ENCODE measurements at regions of chrX and their contacts with region 1.

Region 1: GRCh38 chrX:146934256-146934655 is 119.7 kb upstream of the CXorf51A start:
- DNase-seq: no peak
- H3K4me3 ChIP-seq: no peak overlapping the region
- H3K27ac ChIP-seq: no peak overlapping the region
- H3K4me1 ChIP-seq: no peaks in the 10 kb centered on the region
- H3K27me3 ChIP-seq: no peaks in the 10 kb centered on the region
- CTCF ChIP-seq: no peak
- EP300 ChIP-seq: no peak
- POLR2A ChIP-seq: no peak

Region 2: DNA sequence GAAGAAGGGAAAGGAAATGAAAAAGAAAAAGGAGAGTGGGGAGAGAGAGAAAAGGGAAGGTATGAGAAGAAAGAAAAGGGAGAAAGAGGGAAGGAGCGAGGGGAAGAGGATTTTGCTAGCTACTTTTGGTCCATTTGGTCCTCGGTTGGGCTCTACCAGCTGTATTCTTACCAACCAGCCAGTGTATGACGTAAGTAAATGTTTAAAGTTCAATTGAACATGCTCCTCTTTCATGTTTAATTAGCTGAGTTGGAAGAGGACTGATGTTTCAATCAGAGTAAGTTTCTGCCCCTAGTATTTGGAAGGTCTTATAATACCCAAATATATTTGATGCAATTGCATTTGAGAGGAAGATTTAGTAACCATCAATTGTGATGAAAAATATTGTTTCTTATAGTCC is 548.7 kb before region 1 on chrX:
- in situ Hi-C with region 1: no loop called
- intact Hi-C with region 1: no loop called
- DNase-seq: no peak
- H3K4me3 ChIP-seq: no peak overlapping the region
- H3K27ac ChIP-seq: no peak overlapping the region
- H3K4me1 ChIP-seq: no peaks in the 10 kb centered on the region
- H3K27me3 ChIP-seq: no peaks in the 10 kb centered on the region
- CTCF ChIP-seq: no peak
- EP300 ChIP-seq: no peak
- POLR2A ChIP-seq: no peak

Region 3: GRCh38 chrX:146956760-146957159 is 22.5 kb after region 1 on chrX:
- in situ Hi-C with region 1: no loop called
- intact Hi-C with region 1: loop called (anchors 1 kb)
- DNase-seq: no peak
- H3K4me3 ChIP-seq: no peak overlapping the region
- H3K27ac ChIP-seq: no peak overlapping the region
- H3K4me1 ChIP-seq: no peaks in the 10 kb centered on the region
- H3K27me3 ChIP-seq: no peaks in the 10 kb centered on the region
- CTCF ChIP-seq: no peak
- EP300 ChIP-seq: no peak
- POLR2A ChIP-seq: no peak

Region 4: DNA sequence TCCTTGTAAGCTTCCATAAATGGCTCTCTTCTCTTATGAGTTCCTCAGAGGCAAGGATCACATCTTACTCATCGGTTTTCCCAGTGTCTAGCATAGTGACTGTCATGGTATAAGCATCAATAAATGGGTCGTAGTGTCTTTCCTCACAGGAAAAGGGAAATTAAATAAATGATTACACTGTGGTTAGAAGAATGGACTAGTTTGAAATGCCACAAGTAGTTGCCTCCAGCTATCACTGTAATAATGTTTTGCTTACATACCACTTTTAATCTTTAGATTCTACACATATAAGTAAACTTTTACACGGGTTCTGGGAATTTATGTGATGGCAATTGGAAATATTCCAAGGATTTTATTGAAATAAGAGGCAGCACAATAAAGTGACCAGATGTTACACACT is 33.0 kb after region 1 on chrX:
- in situ Hi-C with region 1: no loop called
- intact Hi-C with region 1: no loop called
- DNase-seq: no peak
- H3K4me3 ChIP-seq: no peak overlapping the region
- H3K27ac ChIP-seq: no peak overlapping the region
- H3K4me1 ChIP-seq: no peaks in the 10 kb centered on the region
- H3K27me3 ChIP-seq: no peaks in the 10 kb centered on the region
- CTCF ChIP-seq: no peak
- EP300 ChIP-seq: no peak
- POLR2A ChIP-seq: no peak